ENCODE measurements at regions of chr16 and their contacts with region 1.

Region 1: GRCh38 chr16:21708533-21709115 is 44.9 kb downstream of the OTOA start:
- DNase-seq: no peak

Region 2: GRCh38 chr16:21574381-21574780 is 134.2 kb before region 1 on chr16:
- intact Hi-C with region 1: loop called (anchors 5 kb)
- DNase-seq: no peak

Region 3: DNA sequence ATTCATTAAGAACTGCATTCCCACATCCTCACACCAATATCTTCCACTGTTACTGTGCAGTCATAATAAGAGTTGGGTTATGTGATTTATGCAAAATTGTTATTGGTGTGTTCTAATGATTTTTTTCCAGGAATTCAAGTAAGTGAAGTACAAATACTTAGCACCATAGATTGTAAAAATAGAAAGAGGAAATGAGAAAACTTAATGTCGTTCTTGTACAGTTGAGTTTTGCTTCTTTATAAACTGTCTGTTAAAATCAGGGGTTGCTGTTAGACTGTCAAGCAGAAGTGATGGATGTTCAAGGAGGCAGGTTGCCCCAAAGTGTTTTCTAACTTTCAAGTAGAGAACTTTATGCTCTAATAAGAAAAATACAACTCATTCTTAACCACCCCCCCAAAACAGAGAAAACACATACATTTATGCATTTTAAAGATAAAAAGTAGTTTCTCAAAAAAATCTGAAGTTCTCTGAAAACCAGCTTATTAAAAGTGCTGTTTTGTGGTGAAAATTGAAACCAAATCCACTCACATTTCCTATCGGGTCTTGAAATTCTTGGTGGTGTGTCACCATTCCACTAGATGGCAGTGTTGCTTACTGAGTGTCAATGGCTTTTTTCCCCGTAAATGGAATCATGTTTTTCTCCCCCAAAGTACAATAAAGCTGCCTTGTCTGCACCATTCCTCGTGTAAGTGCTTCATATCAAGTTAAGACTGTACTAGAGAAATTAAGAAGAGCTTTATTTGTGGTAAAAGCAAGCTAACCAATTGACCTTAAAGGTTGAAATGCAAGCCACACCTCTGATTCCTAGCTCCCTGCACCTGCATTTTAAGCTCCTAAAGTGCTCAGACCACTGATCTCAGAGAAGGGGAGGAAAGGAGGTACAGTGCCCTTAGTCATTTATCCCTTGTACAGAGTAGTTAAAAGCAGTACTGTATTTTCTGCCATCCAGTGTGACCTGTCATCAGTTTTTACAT is 51.5 kb before region 1 on chr16:
- intact Hi-C with region 1: loop called (anchors 2 kb)
- DNase-seq: no peak

Measured in cardiac septum (tissue), 1 donor.